Stomach (tissue), 19 donors: ENCODE measurements at regions of chr1 and their contacts with region 1.

Region 1: DNA sequence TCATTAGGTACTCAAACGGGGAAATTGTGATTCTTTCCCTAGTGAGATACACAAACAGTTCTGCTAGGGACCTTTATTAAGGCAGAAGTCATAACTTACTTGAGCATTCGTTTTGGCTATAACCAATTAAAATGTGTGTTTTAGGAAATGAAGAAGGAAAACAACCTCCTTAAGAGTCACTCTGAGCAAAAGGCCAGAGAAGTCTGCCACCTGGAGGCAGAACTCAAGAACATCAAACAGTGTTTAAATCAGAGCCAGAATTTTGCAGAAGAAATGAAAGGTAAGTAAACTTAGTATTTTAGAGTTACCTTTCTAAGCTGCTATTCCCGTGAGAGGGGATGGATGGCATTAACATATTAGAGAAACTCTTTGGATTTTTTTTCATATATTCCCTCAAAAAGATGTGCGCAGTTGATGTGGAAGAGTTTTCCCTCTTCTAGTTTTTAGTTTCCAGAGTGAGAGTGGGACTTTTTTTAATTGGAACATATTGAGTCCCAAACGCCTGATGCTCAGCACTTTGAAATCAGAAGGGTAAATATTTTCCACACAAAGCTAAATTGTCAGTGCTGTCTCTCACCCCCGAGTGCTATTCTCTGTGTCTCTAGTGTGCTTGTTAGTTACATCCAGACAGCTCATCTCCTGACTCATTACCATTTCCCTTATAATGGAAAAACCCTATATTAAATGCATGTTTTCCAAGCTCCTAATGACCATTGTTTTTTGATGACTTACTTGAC is 34.9 kb downstream of the CENPF start:
- DNase-seq: peak in 1 of 2 donors; percentile 73
- H3K4me3 ChIP-seq: no peak overlapping the region
- H3K27ac ChIP-seq: no peak overlapping the region
- H3K4me1 ChIP-seq: peaks cover 0 to 6% (median 0%) of the 10 kb centered on the region in 4 donors
- H3K27me3 ChIP-seq: no peaks in the 10 kb centered on the region
- CTCF ChIP-seq: peak in 4 of 7 experiments; percentile 25 to 55 (median 50)
- EP300 ChIP-seq: no peak
- POLR2A ChIP-seq: no peak

Region 2: GRCh38 chr1:214213136-214213535 is 424.8 kb before region 1 on chr1:
- intact Hi-C with region 1: loop called (anchors 10 kb)
- DNase-seq: no peak
- H3K4me3 ChIP-seq: no peak overlapping the region
- H3K27ac ChIP-seq: no peak overlapping the region
- H3K4me1 ChIP-seq: peaks cover 6 to 26% (median 16%) of the 10 kb centered on the region in 4 donors
- H3K27me3 ChIP-seq: peaks cover 0 to 10% (median 0%) of the 10 kb centered on the region in 3 donors
- CTCF ChIP-seq: no peak
- EP300 ChIP-seq: no peak
- POLR2A ChIP-seq: no peak

Region 3: GRCh38 chr1:214857716-214858115 is 219.8 kb after region 1 on chr1:
- intact Hi-C with region 1: no loop called
- DNase-seq: no peak
- H3K4me3 ChIP-seq: no peak overlapping the region
- H3K27ac ChIP-seq: no peak overlapping the region
- H3K4me1 ChIP-seq: no peaks in the 10 kb centered on the region
- H3K27me3 ChIP-seq: no peaks in the 10 kb centered on the region
- CTCF ChIP-seq: no peak
- EP300 ChIP-seq: no peak
- POLR2A ChIP-seq: no peak

Region 4: DNA sequence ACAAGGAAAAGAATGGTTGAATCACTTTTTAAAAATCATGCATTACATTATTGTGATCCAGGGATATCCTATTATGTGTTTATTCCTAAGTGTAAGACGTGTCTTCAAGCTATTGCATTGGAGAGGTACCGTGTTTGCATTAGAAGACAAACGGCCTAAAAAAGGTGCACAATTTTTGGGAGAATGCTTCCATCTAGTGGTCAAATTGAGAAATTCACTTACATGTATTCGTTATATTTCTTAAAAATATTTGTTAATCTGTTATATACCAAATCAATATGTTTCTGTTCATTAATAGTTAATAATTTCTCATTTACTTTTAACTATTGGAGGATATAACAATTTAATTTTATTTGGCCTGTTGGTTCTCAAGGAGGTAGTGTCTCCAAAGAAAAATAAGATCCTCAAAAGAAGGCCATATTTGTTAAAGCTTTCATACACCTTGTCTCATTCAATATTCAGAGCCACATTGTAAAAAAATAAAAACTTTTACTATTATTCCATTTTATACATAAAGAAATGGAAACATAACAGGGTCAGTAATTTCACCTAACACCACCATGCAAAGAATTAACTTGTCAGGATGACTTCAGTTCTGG is 888.8 kb after region 1 on chr1:
- intact Hi-C with region 1: loop called (anchors 10 kb)
- DNase-seq: peak in 1 of 2 donors; percentile 75
- H3K4me3 ChIP-seq: no peak overlapping the region
- H3K27ac ChIP-seq: no peak overlapping the region
- H3K4me1 ChIP-seq: no peaks in the 10 kb centered on the region
- H3K27me3 ChIP-seq: no peaks in the 10 kb centered on the region
- CTCF ChIP-seq: peak in 5 of 7 experiments; percentile 39 to 72 (median 63)
- EP300 ChIP-seq: no peak
- POLR2A ChIP-seq: no peak